PC-3 (cell line): ENCODE measurements at regions of chr4 and their contacts with region 1.

Region 1: DNA sequence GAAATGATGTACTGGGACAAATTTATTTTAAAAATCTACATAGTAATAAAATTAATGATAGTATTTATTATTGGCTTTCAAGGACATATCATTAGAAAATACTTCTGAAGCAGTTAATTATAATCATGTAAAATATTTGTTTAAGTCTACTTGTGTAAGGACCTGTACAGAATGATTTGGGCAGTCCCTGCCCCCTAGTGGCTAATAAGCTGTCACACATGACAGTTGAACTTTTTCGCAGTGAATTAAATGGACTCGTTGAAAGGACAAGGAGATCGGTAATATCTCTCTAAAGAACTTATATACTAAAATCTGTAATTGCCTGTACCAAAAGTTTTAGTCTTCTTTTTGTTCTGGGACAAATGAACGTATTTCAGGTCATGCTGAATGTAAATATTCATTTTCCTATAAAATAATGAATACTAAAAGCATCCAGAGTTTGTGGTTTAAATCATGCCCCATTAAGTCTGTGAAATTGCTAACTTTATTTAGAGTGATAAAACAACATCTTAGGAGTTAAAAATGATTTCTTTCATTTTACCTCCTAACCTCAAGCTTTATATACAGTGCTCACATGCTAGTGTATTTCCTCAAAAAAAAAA is 13.6 kb downstream of the EXOC1 start:
- DNase-seq: peak; percentile 79
- ATAC-seq: peak; percentile 79
- H3K4me3 ChIP-seq: no peak overlapping the region
- H3K27ac ChIP-seq: peak overlapping the region; percentile 41
- H3K4me1 ChIP-seq: peaks cover 28% of the 10 kb centered on the region
- H3K27me3 ChIP-seq: no peaks in the 10 kb centered on the region
- CTCF ChIP-seq: peak; percentile 95

Region 2: GRCh38 chr4:55546756-55547465 is 320.2 kb before region 1 on chr4 and contains the start of gene CLOCK:
- CTCF ChIA-PET with region 1: no interaction called
- POLR2A ChIA-PET with region 1: no interaction called
- intact Hi-C with region 1: loop called (anchors 2 kb)
- DNase-seq: peak; percentile 87
- ATAC-seq: peak; percentile 49
- H3K4me3 ChIP-seq: peak within 1 kb of the TSS; percentile 86
- H3K27ac ChIP-seq: peak within 1 kb of the TSS; percentile 85
- H3K4me1 ChIP-seq: peaks cover 60% of the 10 kb centered on the region
- H3K27me3 ChIP-seq: no peaks in the 10 kb centered on the region
- CTCF ChIP-seq: peak; percentile 59
- total RNA-seq, gene CLOCK: 36.3 and 39.7 TPM in 2 replicates

Region 3: GRCh38 chr4:55736605-55737183 is 130.4 kb before region 1 on chr4:
- CTCF ChIA-PET with region 1: no interaction called
- POLR2A ChIA-PET with region 1: no interaction called
- intact Hi-C with region 1: loop called (anchors 2 kb)
- DNase-seq: peak; percentile 64
- ATAC-seq: no peak
- H3K4me3 ChIP-seq: no peak overlapping the region
- H3K27ac ChIP-seq: no peak overlapping the region
- H3K4me1 ChIP-seq: peaks cover 15% of the 10 kb centered on the region
- H3K27me3 ChIP-seq: no peaks in the 10 kb centered on the region
- CTCF ChIP-seq: peak; percentile 77

Region 4: GRCh38 chr4:55754754-55755350 is 112.2 kb before region 1 on chr4:
- CTCF ChIA-PET with region 1: no interaction called
- POLR2A ChIA-PET with region 1: no interaction called
- intact Hi-C with region 1: loop called (anchors 5 kb)
- DNase-seq: peak; percentile 80
- ATAC-seq: peak; percentile 69
- H3K4me3 ChIP-seq: no peak overlapping the region
- H3K27ac ChIP-seq: peak overlapping the region; percentile 1; the same call in 1 of the 2 replicates
- H3K4me1 ChIP-seq: peaks cover 22% of the 10 kb centered on the region
- H3K27me3 ChIP-seq: no peaks in the 10 kb centered on the region
- CTCF ChIP-seq: no peak

Region 5: DNA sequence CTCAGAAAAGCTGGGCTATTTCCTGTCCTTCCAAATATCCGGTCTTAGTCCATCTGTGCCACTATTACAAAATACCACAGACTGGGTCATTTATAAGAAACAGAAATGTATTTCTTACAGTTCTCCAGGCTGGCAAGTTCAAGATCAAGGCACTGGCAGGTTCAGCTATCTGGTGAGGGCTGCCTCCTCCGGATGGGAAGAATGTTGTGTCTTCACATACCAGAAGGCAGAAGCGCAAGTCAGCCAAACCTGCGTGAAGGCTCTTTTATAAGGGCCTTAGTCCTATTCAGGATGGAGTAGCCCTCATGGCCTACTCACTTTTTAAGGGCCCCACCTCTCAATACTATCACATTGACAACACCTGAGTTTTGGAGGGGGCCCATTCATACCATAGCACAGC is 48.4 kb before region 1 on chr4:
- CTCF ChIA-PET with region 1: no interaction called
- POLR2A ChIA-PET with region 1: no interaction called
- intact Hi-C with region 1: no loop called
- DNase-seq: no peak
- ATAC-seq: no peak
- H3K4me3 ChIP-seq: no peak overlapping the region
- H3K27ac ChIP-seq: no peak overlapping the region
- H3K4me1 ChIP-seq: no peaks in the 10 kb centered on the region
- H3K27me3 ChIP-seq: peaks cover 15% of the 10 kb centered on the region
- CTCF ChIP-seq: no peak